CD8-positive, alpha-beta memory T cell (primary cell): ENCODE measurements at regions of chr20 and their contacts with region 1.

Region 1: GRCh38 chr20:645318-646106 is 7.5 kb downstream of the SRXN1 start:
- DNase-seq: peak; percentile 43 to 68 (median 51)
- H3K4me3 ChIP-seq: no peak overlapping the region
- H3K4me3 Mint-ChIP-seq: peak overlapping the region in 1 of 7 donors; percentile 15
- H3K27ac ChIP-seq: no peak overlapping the region
- H3K27ac Mint-ChIP-seq: peak overlapping the region in 1 of 8 donors; percentile 43
- H3K4me1 ChIP-seq: peaks cover 7% of the 10 kb centered on the region
- H3K4me1 Mint-ChIP-seq: peaks cover 16 to 39% (median 27%) of the 10 kb centered on the region in 3 donors
- H3K27me3 ChIP-seq: peaks cover 7% of the 10 kb centered on the region
- H3K27me3 Mint-ChIP-seq: peaks cover 18 to 24% of the 10 kb centered on the region in 2 donors

Region 2: GRCh38 chr20:667391-667964 is 22.0 kb after region 1 on chr20:
- CTCF ChIA-PET with region 1: interaction called, 12 read pairs
- POLR2A ChIA-PET with region 1: no interaction called
- DNase-seq: peak in 3 of 5 donors; percentile 49 to 70 (median 63)
- H3K4me3 ChIP-seq: no peak overlapping the region
- H3K4me3 Mint-ChIP-seq: no peak overlapping the region
- H3K27ac ChIP-seq: no peak overlapping the region
- H3K27ac Mint-ChIP-seq: no peak overlapping the region
- H3K4me1 ChIP-seq: no peaks in the 10 kb centered on the region
- H3K4me1 Mint-ChIP-seq: peaks cover 0 to 12% (median 5%) of the 10 kb centered on the region in 3 donors
- H3K27me3 ChIP-seq: peaks cover 18% of the 10 kb centered on the region
- H3K27me3 Mint-ChIP-seq: peaks cover 35 to 71% of the 10 kb centered on the region in 2 donors